K562 (cell line): ENCODE measurements at regions of chr6 and their contacts with region 1.

Region 1: DNA sequence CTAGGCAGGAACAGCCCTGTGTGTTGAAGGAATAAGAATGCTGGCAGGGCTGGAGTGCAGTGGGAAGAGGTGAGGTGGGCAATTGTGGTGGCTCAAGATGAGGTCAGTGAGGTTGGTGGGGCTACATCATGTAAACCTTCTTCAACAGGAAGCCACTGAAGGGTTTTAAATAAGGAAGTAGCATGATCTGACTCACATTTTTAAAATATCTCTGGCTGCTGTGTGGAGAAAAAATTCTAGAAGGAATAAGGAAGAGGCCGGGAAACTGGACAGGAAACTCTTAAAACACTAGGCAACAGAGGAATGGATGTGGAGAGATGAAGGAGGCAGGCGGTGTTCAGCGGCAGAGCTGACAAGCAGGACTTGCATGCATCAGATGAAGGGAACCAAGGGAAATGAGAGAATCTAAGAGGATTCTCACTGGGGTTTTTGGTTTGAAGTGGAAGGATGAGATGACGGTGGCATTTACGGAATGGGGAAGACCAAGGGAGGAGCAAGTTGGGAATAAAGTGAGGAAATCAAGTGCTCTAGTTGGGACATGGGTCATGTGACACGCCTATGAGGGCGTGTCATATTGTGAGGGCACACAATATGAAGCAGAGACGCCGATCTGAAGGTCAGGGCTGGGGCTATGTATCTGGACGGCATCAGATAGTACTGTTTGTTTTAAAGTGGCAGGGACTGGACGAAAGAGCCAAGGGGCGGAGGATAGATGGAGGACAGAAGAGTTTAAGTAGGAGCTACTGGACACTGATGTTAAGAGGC is 18.2 kb downstream of the TMEM242 start:
- DNase-seq: peak in 2 of 4 experiments; percentile 32 to 50
- ATAC-seq: peak; percentile 89
- H3K4me3 ChIP-seq: no peak overlapping the region
- H3K27ac ChIP-seq: 0 out of 3 replicates have a peak overlapping the region, but pooled peaks have one; percentile 5
- H3K4me1 ChIP-seq: peaks cover 19 to 23% of the 10 kb centered on the region in 2 experiments
- H3K27me3 ChIP-seq: no peaks in the 10 kb centered on the region
- CTCF ChIP-seq: no peak
- EP300 ChIP-seq: no peak
- POLR2A ChIP-seq: no peak
- RAD21 ChIP-seq: no peak

Region 2: GRCh38 chr6:156599978-156600590 is 705.0 kb before region 1 on chr6:
- CTCF ChIA-PET with region 1: no interaction called
- POLR2A ChIA-PET with region 1: no interaction called
- in situ Hi-C with region 1: no loop called
- intact Hi-C with region 1: no loop called
- DNase-seq: no peak
- ATAC-seq: no peak
- H3K4me3 ChIP-seq: no peak overlapping the region
- H3K27ac ChIP-seq: no peak overlapping the region
- H3K4me1 ChIP-seq: peaks cover 0 to 6% of the 10 kb centered on the region in 2 experiments; a peak in 1 of 5 replicates
- H3K27me3 ChIP-seq: peaks cover 33 to 39% of the 10 kb centered on the region in 2 experiments
- CTCF ChIP-seq: no peak
- EP300 ChIP-seq: no peak
- POLR2A ChIP-seq: no peak
- RAD21 ChIP-seq: no peak

Region 3: DNA sequence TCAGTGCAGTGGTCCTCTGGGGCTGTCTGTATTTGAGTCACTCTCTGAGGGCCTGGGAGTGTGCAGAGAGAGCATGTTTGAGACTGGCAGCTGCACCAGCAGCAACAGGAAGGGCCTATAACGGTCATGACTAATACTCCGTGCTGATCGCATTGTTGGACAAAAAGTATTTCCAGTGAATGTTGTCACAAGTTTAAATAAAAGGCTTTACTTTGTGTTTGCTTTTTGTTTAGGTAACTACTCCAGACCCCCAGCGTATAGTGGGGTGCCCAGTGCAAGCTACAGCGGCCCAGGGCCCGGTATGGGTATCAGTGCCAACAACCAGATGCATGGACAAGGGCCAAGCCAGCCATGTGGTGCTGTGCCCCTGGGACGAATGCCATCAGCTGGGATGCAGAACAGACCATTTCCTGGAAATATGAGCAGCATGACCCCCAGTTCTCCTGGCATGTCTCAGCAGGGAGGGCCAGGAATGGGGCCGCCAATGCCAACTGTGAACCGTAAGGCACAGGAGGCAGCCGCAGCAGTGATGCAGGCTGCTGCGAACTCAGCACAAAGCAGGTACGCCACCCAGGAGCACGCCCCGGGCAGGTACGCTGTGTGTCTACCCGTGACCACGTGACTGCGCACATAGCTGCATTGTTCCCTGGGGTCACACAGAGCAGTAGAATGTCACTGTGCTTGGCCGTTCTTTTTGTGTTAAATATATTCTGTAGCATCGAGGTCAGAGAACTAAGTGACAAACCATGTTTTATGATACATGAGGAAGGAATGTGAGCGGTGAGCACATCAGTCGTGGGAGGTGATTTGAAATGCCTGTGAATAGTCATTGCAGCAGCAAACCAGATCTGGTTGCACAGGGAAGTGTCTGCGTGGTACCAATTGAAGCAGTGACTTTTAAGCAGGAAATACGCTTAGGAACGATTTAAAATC is 156.4 kb before region 1 on chr6:
- CTCF ChIA-PET with region 1: no interaction called
- POLR2A ChIA-PET with region 1: no interaction called
- in situ Hi-C with region 1: no loop called
- intact Hi-C with region 1: no loop called
- DNase-seq: no peak
- ATAC-seq: no peak
- H3K4me3 ChIP-seq: no peak overlapping the region
- H3K27ac ChIP-seq: no peak overlapping the region
- H3K4me1 ChIP-seq: peaks cover 0 to 2% of the 10 kb centered on the region in 2 experiments; a peak in 1 of 5 replicates
- H3K27me3 ChIP-seq: no peaks in the 10 kb centered on the region
- CTCF ChIP-seq: no peak
- EP300 ChIP-seq: no peak
- POLR2A ChIP-seq: no peak
- RAD21 ChIP-seq: no peak

Region 4: GRCh38 chr6:157294654-157295053 is 10.4 kb before region 1 on chr6:
- CTCF ChIA-PET with region 1: no interaction called
- POLR2A ChIA-PET with region 1: interaction called, 14 read pairs
- in situ Hi-C with region 1: no loop called
- intact Hi-C with region 1: no loop called
- DNase-seq: no peak
- ATAC-seq: no peak
- H3K4me3 ChIP-seq: no peak overlapping the region
- H3K27ac ChIP-seq: no peak overlapping the region
- H3K4me1 ChIP-seq: peaks cover 0 to 2% of the 10 kb centered on the region in 2 experiments; a peak in 1 of 5 replicates
- H3K27me3 ChIP-seq: no peaks in the 10 kb centered on the region
- CTCF ChIP-seq: no peak
- EP300 ChIP-seq: no peak
- POLR2A ChIP-seq: no peak
- RAD21 ChIP-seq: no peak

Region 5: GRCh38 chr6:157614026-157614568 is 309.0 kb after region 1 on chr6:
- CTCF ChIA-PET with region 1: no interaction called
- POLR2A ChIA-PET with region 1: no interaction called
- in situ Hi-C with region 1: no loop called
- intact Hi-C with region 1: no loop called
- DNase-seq: no peak
- ATAC-seq: peak; percentile 65
- H3K4me3 ChIP-seq: no peak overlapping the region
- H3K27ac ChIP-seq: no peak overlapping the region
- H3K4me1 ChIP-seq: peaks cover 7 to 18% of the 10 kb centered on the region in 2 experiments; a peak in 4 of 5 replicates
- H3K27me3 ChIP-seq: no peaks in the 10 kb centered on the region
- CTCF ChIP-seq: peak; percentile 11 to 43 (median 31); a peak in 3 of 6 replicates
- EP300 ChIP-seq: no peak
- POLR2A ChIP-seq: no peak
- RAD21 ChIP-seq: peak; percentile 36 to 47; a peak in 3 of 4 replicates